ENCODE measurements at regions of chr5 and their contacts with region 1.

Region 1: GRCh38 chr5:96590797-96591196 is 71.4 kb upstream of the CAST start:
- DNase-seq: no peak
- ATAC-seq: no peak
- H3K4me3 ChIP-seq: no peak overlapping the region
- H3K27ac ChIP-seq: no peak overlapping the region
- H3K4me1 ChIP-seq: no peaks in the 10 kb centered on the region
- H3K27me3 ChIP-seq: no peaks in the 10 kb centered on the region

Region 2: GRCh38 chr5:96427823-96428222 is 163.0 kb before region 1 on chr5:
- intact Hi-C with region 1: no loop called
- DNase-seq: no peak
- ATAC-seq: no peak
- H3K4me3 ChIP-seq: no peak overlapping the region
- H3K27ac ChIP-seq: no peak overlapping the region
- H3K4me1 ChIP-seq: no peaks in the 10 kb centered on the region
- H3K27me3 ChIP-seq: peaks cover 0 to 3% of the 10 kb centered on the region in 2 donors

Region 3: DNA sequence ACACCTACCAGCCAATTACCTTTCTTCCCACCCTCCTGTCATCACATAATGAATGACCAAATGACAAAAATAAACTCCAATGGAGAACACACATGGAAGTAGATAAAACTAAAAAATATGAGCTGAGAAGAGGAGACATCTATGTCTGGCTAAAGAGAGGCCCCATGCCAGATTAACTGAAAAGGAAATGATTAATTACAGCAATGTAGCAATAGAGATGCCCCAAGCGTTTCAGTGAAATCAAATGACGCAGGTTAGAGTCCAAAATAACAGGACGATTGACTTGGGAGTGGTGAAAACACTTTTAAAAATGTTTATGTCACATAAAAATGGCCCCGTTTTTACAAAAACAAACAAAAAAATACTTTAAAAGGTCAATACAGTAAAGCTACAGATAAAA is 98.1 kb before region 1 on chr5:
- intact Hi-C with region 1: loop called in 1 of 2 experiments (anchors 5 kb)
- DNase-seq: no peak
- ATAC-seq: no peak
- H3K4me3 ChIP-seq: no peak overlapping the region
- H3K27ac ChIP-seq: no peak overlapping the region
- H3K4me1 ChIP-seq: peaks cover 0 to 2% of the 10 kb centered on the region in 2 donors
- H3K27me3 ChIP-seq: no peaks in the 10 kb centered on the region